GM12878 (cell line): ENCODE measurements at regions of chr6 and their contacts with region 1.

Region 1: GRCh38 chr6:136772685-136773472 is 19.4 kb downstream of the MAP3K5 start:
- DNase-seq: peak; percentile 93
- ATAC-seq: peak; percentile 75
- H3K4me3 ChIP-seq: peak overlapping the region; percentile 49
- H3K27ac ChIP-seq: peak overlapping the region; percentile 92
- H3K4me1 ChIP-seq: peaks cover 57% of the 10 kb centered on the region
- H3K27me3 ChIP-seq: no peaks in the 10 kb centered on the region
- CTCF ChIP-seq: no peak
- EP300 ChIP-seq: peak; percentile 50 to 93; a peak in 3 of 4 replicates
- POLR2A ChIP-seq: peak; percentile 38; the same call in 1 of the 2 replicates
- RAD21 ChIP-seq: no peak; the same call in 1 of the 2 replicates

Region 2: DNA sequence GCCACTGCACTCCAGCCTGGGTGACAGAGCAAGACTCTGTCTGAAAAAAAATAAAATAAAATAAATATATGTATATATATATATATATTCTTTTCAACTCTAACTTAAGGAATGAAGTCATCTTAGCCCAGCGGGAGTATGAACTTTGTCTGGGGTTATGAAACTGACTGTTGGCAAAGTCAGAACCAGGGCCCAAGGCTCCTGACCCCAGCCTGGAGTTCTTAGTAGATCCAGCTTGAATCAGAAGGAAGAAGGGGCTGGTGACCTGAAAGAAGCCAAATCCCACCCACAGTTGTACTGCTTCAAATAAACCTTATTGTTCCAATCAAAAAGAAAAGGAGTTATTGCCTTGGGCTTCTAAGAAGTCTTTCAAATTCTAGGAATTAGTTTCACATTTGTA is 139.5 kb before region 1 on chr6:
- CTCF ChIA-PET with region 1: no interaction called
- POLR2A ChIA-PET with region 1: no interaction called
- RAD21 ChIA-PET with region 1: no interaction called
- SMC1A ChIA-PET with region 1: no interaction called
- in situ Hi-C with region 1: no loop called
- intact Hi-C with region 1: no loop called
- DNase-seq: no peak
- ATAC-seq: no peak
- H3K4me3 ChIP-seq: no peak overlapping the region
- H3K27ac ChIP-seq: no peak overlapping the region
- H3K4me1 ChIP-seq: no peaks in the 10 kb centered on the region
- H3K27me3 ChIP-seq: no peaks in the 10 kb centered on the region
- CTCF ChIP-seq: no peak
- EP300 ChIP-seq: no peak
- POLR2A ChIP-seq: no peak
- RAD21 ChIP-seq: no peak

Region 3: DNA sequence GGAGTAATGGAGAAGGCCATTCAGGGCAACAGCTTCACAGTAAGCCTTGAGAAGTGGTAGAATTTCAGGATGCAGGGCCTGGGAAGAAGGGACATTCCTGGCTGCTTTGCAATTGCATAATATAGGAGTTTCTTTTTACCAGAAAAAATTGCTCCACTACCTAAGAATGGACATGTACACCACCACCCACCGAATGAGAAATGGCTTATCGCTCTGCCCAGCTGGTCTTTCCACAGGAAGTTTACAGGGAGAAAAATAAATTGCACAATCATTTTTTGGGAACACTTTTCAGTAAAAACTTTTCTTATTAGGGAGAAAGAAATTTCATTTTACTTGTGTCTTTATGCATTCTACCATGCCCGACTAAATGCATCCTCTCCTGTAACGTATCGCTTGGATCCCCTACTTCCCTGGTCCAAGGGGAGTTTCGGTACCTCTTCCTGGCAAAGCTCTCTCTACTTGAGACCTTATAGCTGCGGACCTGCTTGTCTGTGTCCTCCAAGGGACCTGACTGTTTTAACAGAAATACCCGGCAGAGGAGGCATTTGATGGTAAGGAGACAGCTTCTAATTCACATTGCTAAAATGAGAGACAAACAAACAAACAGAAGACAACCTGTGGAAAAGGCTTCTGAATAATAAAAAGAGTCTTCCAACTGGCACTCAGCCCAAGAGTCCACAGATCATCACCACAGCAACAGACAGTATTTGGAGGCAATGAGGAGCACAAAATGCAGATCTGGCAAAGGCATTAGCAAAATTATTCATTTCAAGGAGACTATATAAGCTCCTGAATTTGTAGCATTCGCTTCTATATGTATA is 34.8 kb before region 1 on chr6:
- CTCF ChIA-PET with region 1: no interaction called
- POLR2A ChIA-PET with region 1: no interaction called
- RAD21 ChIA-PET with region 1: interaction called, 3 read pairs
- SMC1A ChIA-PET with region 1: interaction called, 19 read pairs
- in situ Hi-C with region 1: no loop called
- intact Hi-C with region 1: no loop called
- DNase-seq: no peak
- ATAC-seq: no peak
- H3K4me3 ChIP-seq: no peak overlapping the region
- H3K27ac ChIP-seq: no peak overlapping the region
- H3K4me1 ChIP-seq: peaks cover 7% of the 10 kb centered on the region; the same call in 1 of the 2 replicates
- H3K27me3 ChIP-seq: no peaks in the 10 kb centered on the region
- CTCF ChIP-seq: no peak
- EP300 ChIP-seq: no peak
- POLR2A ChIP-seq: no peak
- RAD21 ChIP-seq: no peak

Region 4: DNA sequence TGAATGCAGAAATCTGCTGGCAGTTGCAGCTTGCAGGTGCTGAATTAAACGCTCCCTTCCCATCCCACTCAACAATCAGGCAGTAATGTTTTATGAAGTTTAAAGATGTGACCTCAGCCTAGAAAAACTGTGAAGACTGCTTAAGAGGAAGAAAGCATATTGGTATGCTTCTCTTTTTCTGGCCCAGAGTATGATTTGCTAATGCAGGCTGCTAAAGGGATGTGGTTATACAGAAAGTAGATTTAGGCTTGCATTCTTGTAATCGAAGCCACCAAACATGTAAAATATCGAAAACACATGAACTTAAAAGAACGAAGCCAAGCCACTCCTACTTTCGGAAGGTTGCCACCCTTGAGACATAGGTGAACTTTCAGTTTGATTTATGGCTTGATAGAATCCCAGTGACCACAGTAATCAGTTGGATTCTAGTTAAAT is 21.3 kb before region 1 on chr6:
- CTCF ChIA-PET with region 1: interaction called, 7 read pairs
- POLR2A ChIA-PET with region 1: interaction called, 3 read pairs
- RAD21 ChIA-PET with region 1: interaction called, 3 read pairs
- SMC1A ChIA-PET with region 1: interaction called, 25 read pairs
- in situ Hi-C with region 1: no loop called
- intact Hi-C with region 1: no loop called
- DNase-seq: peak; percentile 94
- ATAC-seq: peak; percentile 93
- H3K4me3 ChIP-seq: peak overlapping the region; percentile 31; the same call in 1 of the 2 replicates
- H3K27ac ChIP-seq: peak overlapping the region; percentile 93
- H3K4me1 ChIP-seq: peaks cover 48% of the 10 kb centered on the region
- H3K27me3 ChIP-seq: no peaks in the 10 kb centered on the region
- CTCF ChIP-seq: no peak
- EP300 ChIP-seq: peak; percentile 21 to 70; a peak in 3 of 4 replicates
- POLR2A ChIP-seq: no peak
- RAD21 ChIP-seq: 0 out of 2 replicates have a peak, but pooled peaks have one; percentile 28

Region 5: DNA sequence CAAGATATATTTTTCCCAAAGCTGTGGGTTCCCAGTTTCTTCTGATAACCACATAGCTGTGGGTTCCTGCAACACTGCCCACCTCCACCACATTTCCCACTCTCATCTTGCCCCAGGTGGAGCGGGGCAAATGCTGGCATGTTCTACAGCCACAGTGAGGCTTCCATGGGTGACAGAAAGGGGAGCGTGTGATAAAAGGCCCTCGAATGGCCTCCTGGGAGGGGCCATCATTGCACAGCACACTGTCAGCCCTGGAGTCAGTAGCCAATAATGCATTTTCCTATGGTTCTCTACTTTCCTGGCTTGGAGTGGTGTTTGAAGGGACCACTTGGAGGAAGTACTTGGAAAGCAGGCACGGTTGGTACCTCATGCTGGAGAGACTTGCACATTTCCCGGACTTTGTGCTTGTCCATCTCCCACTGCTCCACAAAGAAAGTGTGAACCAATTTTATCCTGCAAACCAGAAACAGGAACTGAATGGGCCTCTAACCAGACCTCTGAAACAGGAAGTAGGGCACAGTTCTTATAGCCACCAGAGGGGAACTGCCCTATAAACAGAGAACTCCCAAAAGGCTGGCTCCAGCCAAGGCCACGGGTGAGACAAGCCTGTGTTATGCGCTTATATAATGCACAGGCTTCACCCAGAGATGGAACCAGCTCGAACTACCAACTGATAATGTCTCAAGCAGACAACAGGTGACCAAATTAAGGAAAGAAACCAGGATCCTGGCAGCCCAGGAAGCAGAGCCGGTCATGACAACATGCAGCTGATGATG is 10.8 kb after region 1 on chr6:
- CTCF ChIA-PET with region 1: interaction called, 26 read pairs
- POLR2A ChIA-PET with region 1: interaction called, 159 read pairs
- RAD21 ChIA-PET with region 1: interaction called, 270 read pairs
- SMC1A ChIA-PET with region 1: interaction called, 227 read pairs
- in situ Hi-C with region 1: no loop called
- intact Hi-C with region 1: no loop called
- DNase-seq: no peak
- ATAC-seq: peak; percentile 75
- H3K4me3 ChIP-seq: peak overlapping the region; percentile 76
- H3K27ac ChIP-seq: peak overlapping the region; percentile 92
- H3K4me1 ChIP-seq: peaks cover 27% of the 10 kb centered on the region
- H3K27me3 ChIP-seq: no peaks in the 10 kb centered on the region
- CTCF ChIP-seq: peak in 2 of 3 experiments; percentile 18 to 34; a peak in 1 of 6 replicates
- EP300 ChIP-seq: peak in 1 of 2 experiments; percentile 59; a peak in 1 of 4 replicates
- POLR2A ChIP-seq: peak; percentile 33; the same call in 1 of the 2 replicates
- RAD21 ChIP-seq: no peak